HepG2 (cell line): ENCODE measurements at regions of chr4 and their contacts with region 1.

Region 1: GRCh38 chr4:45467157-45467556 is 656.7 kb downstream of the GABRG1 start:
- DNase-seq: no peak
- ATAC-seq: no peak
- H3K4me3 ChIP-seq: no peak overlapping the region
- H3K27ac ChIP-seq: no peak overlapping the region
- H3K4me1 ChIP-seq: no peaks in the 10 kb centered on the region
- H3K27me3 ChIP-seq: no peaks in the 10 kb centered on the region
- CTCF ChIP-seq: no peak
- EP300 ChIP-seq: no peak
- POLR2A ChIP-seq: no peak
- RAD21 ChIP-seq: no peak

Region 2: GRCh38 chr4:45131020-45131419 is 336.1 kb before region 1 on chr4:
- CTCF ChIA-PET with region 1: no interaction called
- POLR2A ChIA-PET with region 1: no interaction called
- in situ Hi-C with region 1: no loop called
- intact Hi-C with region 1: no loop called
- DNase-seq: no peak
- ATAC-seq: no peak
- H3K4me3 ChIP-seq: no peak overlapping the region
- H3K27ac ChIP-seq: no peak overlapping the region
- H3K4me1 ChIP-seq: no peaks in the 10 kb centered on the region
- H3K27me3 ChIP-seq: no peaks in the 10 kb centered on the region
- CTCF ChIP-seq: no peak
- EP300 ChIP-seq: no peak
- POLR2A ChIP-seq: no peak
- RAD21 ChIP-seq: no peak

Region 3: GRCh38 chr4:45437381-45437780 is 29.8 kb before region 1 on chr4:
- CTCF ChIA-PET with region 1: no interaction called
- POLR2A ChIA-PET with region 1: no interaction called
- in situ Hi-C with region 1: no loop called
- intact Hi-C with region 1: no loop called
- DNase-seq: no peak
- ATAC-seq: no peak
- H3K4me3 ChIP-seq: no peak overlapping the region
- H3K27ac ChIP-seq: no peak overlapping the region
- H3K4me1 ChIP-seq: no peaks in the 10 kb centered on the region
- H3K27me3 ChIP-seq: no peaks in the 10 kb centered on the region
- CTCF ChIP-seq: no peak
- EP300 ChIP-seq: no peak
- POLR2A ChIP-seq: no peak
- RAD21 ChIP-seq: no peak

Region 4: GRCh38 chr4:46146993-46147392 is 679.8 kb after region 1 on chr4:
- CTCF ChIA-PET with region 1: no interaction called
- POLR2A ChIA-PET with region 1: no interaction called
- in situ Hi-C with region 1: no loop called
- intact Hi-C with region 1: loop called (anchors 10 kb)
- DNase-seq: peak; percentile 6
- ATAC-seq: peak; percentile 35; the same call in 1 of the 3 replicates
- H3K4me3 ChIP-seq: no peak overlapping the region
- H3K27ac ChIP-seq: no peak overlapping the region
- H3K4me1 ChIP-seq: no peaks in the 10 kb centered on the region
- H3K27me3 ChIP-seq: no peaks in the 10 kb centered on the region
- CTCF ChIP-seq: no peak
- EP300 ChIP-seq: no peak
- POLR2A ChIP-seq: no peak
- RAD21 ChIP-seq: no peak